Cardiac septum (tissue), 1 donor: ENCODE measurements at regions of chr2 and their contacts with region 1.

Region 1: GRCh38 chr2:43131024-43131889 is 95.1 kb downstream of the ZFP36L2 start:
- DNase-seq: peak; percentile 91

Region 2: DNA sequence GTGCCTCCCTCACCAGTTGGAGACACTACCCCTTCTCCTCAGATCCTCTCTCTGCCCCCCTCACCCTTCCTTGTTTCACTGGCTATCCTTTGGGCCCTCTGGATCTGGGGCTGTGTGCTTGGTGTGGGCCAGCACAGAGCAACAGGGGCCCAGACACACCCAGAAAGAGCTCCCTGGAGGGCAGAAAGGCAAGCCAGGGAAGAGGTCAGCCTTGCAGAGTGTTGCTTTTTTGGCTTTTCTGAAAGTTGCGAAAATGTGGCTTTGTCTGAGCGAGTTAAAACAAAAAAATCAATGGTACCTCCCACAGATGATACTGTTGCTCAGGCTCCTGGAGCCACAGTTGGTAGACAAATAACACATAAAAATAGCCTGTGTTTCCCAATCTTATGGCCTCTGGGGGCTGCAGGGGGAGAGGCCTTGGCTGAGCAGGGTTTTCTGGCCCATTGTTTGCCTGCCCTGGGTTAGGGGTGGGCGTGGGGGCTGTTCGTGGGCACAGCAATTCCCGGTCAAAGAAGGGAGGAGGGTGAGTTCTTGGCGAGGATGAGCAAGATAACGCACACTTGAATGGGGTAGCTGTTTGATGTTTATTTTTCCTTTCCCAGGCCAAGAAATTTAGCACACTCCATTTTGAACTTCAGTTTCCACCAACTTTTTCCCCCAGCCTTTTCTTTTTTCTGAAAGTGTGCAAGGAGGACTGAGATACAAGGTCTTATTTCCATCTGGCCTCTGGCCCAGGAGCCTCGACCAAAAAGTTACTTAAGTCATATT is 171.8 kb before region 1 on chr2:
- intact Hi-C with region 1: no loop called
- DNase-seq: no peak

Region 3: GRCh38 chr2:43024515-43025011 is 106.7 kb before region 1 on chr2:
- intact Hi-C with region 1: loop called (anchors 5 kb)
- DNase-seq: no peak